ENCODE measurements at regions of chr7 and their contacts with region 1.

Region 1: GRCh38 chr7:46745707-46746090 is 824.6 kb upstream of the IGFBP3 start:
- DNase-seq: no peak
- ATAC-seq: peak in 4 of 8 donors; percentile 55 to 71 (median 64)
- H3K4me3 ChIP-seq: no peak overlapping the region
- H3K27ac ChIP-seq: no peak overlapping the region
- H3K4me1 ChIP-seq: peaks cover 0 to 13% (median 3%) of the 10 kb centered on the region in 9 donors
- H3K27me3 ChIP-seq: no peaks in the 10 kb centered on the region
- CTCF ChIP-seq: peak in 4 of 9 donors; percentile 21 to 41 (median 24)

Region 2: DNA sequence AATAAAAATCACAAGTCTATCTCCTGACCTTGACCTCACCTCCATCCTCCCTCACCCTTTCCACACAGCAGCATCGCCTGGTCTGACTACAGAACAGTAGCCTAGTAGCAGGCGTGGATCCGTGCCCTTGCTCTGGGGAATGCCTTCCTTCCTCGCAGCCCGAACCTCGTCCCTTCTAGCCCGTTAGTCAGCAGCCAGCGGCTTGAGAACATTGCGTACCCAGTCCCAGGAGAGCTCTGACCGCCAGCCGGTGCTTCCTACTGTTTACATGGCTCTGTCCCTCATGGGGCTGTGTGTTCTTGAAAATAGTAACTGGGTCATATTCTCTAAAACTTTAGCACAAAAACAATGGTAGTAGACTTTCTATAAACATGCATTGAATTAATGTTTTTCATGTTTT is 141.9 kb before region 1 on chr7:
- intact Hi-C with region 1: loop called in 1 of 10 experiments (anchors 10 kb)
- DNase-seq: peak; percentile 87
- ATAC-seq: peak; percentile 81 to 98 (median 95)
- H3K4me3 ChIP-seq: no peak overlapping the region
- H3K27ac ChIP-seq: peak overlapping the region; percentile 38 to 89 (median 76)
- H3K4me1 ChIP-seq: peaks cover 15 to 43% (median 23%) of the 10 kb centered on the region in 9 donors
- H3K27me3 ChIP-seq: no peaks in the 10 kb centered on the region
- CTCF ChIP-seq: no peak

Region 3: GRCh38 chr7:47291461-47292081 is 545.9 kb after region 1 on chr7:
- intact Hi-C with region 1: no loop called
- DNase-seq: no peak
- ATAC-seq: peak in 3 of 8 donors; percentile 21 to 67 (median 60)
- H3K4me3 ChIP-seq: no peak overlapping the region
- H3K27ac ChIP-seq: peak overlapping the region in 8 of 10 donors; percentile 6 to 72 (median 34)
- H3K4me1 ChIP-seq: peaks cover 9 to 59% (median 43%) of the 10 kb centered on the region in 9 donors
- H3K27me3 ChIP-seq: no peaks in the 10 kb centered on the region
- CTCF ChIP-seq: no peak